ENCODE measurements at regions of chr11 and their contacts with region 1.

Region 1: GRCh38 chr11:10878408-10879214 is 20.8 kb upstream of the ZBED5 start:
- DNase-seq: no peak
- ATAC-seq: peak; percentile 90
- H3K4me3 Mint-ChIP-seq: no peak overlapping the region
- H3K27ac Mint-ChIP-seq: no peak overlapping the region
- H3K4me1 Mint-ChIP-seq: peaks cover 9% of the 10 kb centered on the region
- H3K27me3 Mint-ChIP-seq: no peaks in the 10 kb centered on the region; the same call in 1 of the 2 replicates
- CTCF ChIP-seq: peak; percentile 47; the same call in 1 of the 2 replicates

Region 2: DNA sequence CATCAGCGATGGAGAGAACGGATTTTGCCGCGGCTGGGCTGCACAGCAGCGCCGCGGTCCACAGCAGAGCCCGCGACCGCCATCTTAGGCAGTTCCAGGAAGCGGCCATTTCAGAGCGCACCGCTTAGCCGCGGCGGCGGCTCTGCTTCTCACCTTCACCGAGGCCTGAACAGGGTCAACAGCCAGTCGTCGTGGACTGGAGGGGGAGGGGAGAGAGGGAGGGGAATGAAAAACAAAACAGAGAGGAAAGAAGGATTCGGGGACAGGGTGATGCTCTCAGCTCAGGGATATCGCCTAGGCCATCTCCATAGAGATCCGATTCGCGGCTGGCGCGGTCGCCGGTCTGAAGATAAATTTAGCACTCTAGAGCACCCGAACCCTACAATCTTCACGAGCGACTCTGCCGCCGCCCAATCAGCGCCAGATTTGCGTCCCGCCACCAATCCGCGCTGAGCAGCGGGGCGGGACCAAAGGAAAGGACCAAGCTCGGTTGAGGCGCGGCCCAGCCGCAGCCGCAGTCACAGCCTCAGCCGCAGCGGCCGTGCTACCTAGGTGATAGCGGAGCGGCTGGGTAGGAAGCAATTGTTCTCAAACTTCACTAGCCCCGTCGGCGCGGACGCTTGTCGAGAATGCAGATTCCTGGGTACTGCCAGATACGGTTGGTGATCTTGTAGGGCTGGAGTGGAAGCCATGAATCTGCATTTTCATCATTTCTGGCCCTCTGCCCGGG is 20.7 kb before region 1 on chr11 and contains the start of gene ZBED5:
- CTCF ChIA-PET with region 1: interaction called, 17 read pairs
- POLR2A ChIA-PET with region 1: no interaction called
- DNase-seq: peak; percentile 96
- ATAC-seq: peak; percentile 96
- H3K4me3 Mint-ChIP-seq: peak within 1 kb of the TSS; percentile 100
- H3K27ac Mint-ChIP-seq: peak within 1 kb of the TSS; percentile 100
- H3K4me1 Mint-ChIP-seq: peaks cover 30% of the 10 kb centered on the region
- H3K27me3 Mint-ChIP-seq: no peaks in the 10 kb centered on the region
- CTCF ChIP-seq: no peak
- total RNA-seq, gene ZBED5: 44.9 to 49.5 TPM (median 48.7 TPM) in 3 replicates

Region 3: GRCh38 chr11:10893714-10894151 is 15.1 kb after region 1 on chr11:
- CTCF ChIA-PET with region 1: interaction called, 16 read pairs
- POLR2A ChIA-PET with region 1: no interaction called
- DNase-seq: no peak
- ATAC-seq: no peak
- H3K4me3 Mint-ChIP-seq: no peak overlapping the region
- H3K27ac Mint-ChIP-seq: no peak overlapping the region
- H3K4me1 Mint-ChIP-seq: no peaks in the 10 kb centered on the region
- H3K27me3 Mint-ChIP-seq: no peaks in the 10 kb centered on the region
- CTCF ChIP-seq: no peak

Region 4: GRCh38 chr11:10900681-10901415 is 22.2 kb after region 1 on chr11:
- CTCF ChIA-PET with region 1: interaction called, 16 read pairs
- POLR2A ChIA-PET with region 1: no interaction called
- DNase-seq: no peak
- ATAC-seq: no peak
- H3K4me3 Mint-ChIP-seq: no peak overlapping the region
- H3K27ac Mint-ChIP-seq: no peak overlapping the region
- H3K4me1 Mint-ChIP-seq: peaks cover 4% of the 10 kb centered on the region; the same call in 1 of the 2 replicates
- H3K27me3 Mint-ChIP-seq: no peaks in the 10 kb centered on the region; the same call in 1 of the 2 replicates
- CTCF ChIP-seq: no peak

Region 5: GRCh38 chr11:10943968-10944367 is 65.4 kb after region 1 on chr11:
- CTCF ChIA-PET with region 1: no interaction called
- POLR2A ChIA-PET with region 1: no interaction called
- DNase-seq: no peak
- ATAC-seq: no peak
- H3K4me3 Mint-ChIP-seq: no peak overlapping the region
- H3K27ac Mint-ChIP-seq: no peak overlapping the region
- H3K4me1 Mint-ChIP-seq: no peaks in the 10 kb centered on the region
- H3K27me3 Mint-ChIP-seq: no peaks in the 10 kb centered on the region; the same call in 1 of the 2 replicates
- CTCF ChIP-seq: no peak

Measured in WTC11 (cell line).